Mammary epithelial cell (primary cell): ENCODE measurements at regions of chr17 and their contacts with region 1.

Region 1: DNA sequence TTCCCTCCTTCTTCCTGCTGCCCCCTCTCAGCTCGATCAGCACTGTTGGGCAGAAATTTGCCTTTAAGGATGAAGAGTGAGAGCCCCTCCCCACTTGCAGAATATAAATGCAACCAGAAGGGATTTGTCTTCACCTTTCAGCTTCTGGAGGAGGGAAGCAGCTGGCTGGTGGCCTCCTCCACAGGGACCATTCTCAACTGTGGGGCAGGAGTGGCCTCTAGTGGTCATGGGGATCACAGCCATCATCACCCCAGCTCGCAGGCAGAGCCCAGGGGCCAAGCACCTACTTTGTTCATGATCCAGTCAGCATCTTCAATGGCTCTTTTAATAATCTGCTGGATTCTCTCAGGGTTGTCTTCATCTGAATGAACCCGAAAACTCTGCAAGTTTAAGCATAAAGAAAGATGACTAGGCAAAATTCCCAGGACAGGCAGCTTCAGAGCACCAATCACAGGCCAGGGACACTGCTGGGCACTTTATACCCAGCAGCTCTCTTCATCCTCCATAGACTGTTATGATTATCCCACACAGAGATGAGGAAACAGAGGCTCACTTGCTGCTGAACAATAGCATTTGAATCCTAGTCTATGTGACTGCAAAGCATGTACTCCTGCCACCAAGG is 13.1 kb downstream of the LYRM9 start:
- DNase-seq: peak; percentile 48
- H3K4me3 ChIP-seq: no peak overlapping the region
- H3K27ac ChIP-seq: no peak overlapping the region
- H3K4me1 ChIP-seq: no peaks in the 10 kb centered on the region
- H3K27me3 ChIP-seq: no peaks in the 10 kb centered on the region
- CTCF ChIP-seq: peak; percentile 92 to 94

Region 2: GRCh38 chr17:27760069-27760885 is 119.8 kb before region 1 on chr17:
- CTCF ChIA-PET with region 1: interaction called, 8 read pairs
- dilution Hi-C with region 1: loop called (anchors 5 kb)
- in situ Hi-C with region 1: loop called (anchors 5 to 10 kb)
- intact Hi-C with region 1: loop called (anchors 1 kb)
- DNase-seq: peak; percentile 19
- H3K4me3 ChIP-seq: no peak overlapping the region
- H3K27ac ChIP-seq: no peak overlapping the region
- H3K4me1 ChIP-seq: no peaks in the 10 kb centered on the region
- H3K27me3 ChIP-seq: no peaks in the 10 kb centered on the region
- CTCF ChIP-seq: peak; percentile 60 to 84

Region 3: GRCh38 chr17:27768858-27769410 is 111.2 kb before region 1 on chr17:
- CTCF ChIA-PET with region 1: no interaction called
- dilution Hi-C with region 1: loop called (anchors 5 kb)
- in situ Hi-C with region 1: loop called (anchors 5 to 10 kb)
- intact Hi-C with region 1: no loop called
- DNase-seq: no peak
- H3K4me3 ChIP-seq: no peak overlapping the region
- H3K27ac ChIP-seq: no peak overlapping the region
- H3K4me1 ChIP-seq: no peaks in the 10 kb centered on the region
- H3K27me3 ChIP-seq: no peaks in the 10 kb centered on the region
- CTCF ChIP-seq: no peak

Region 4: GRCh38 chr17:27793168-27793905 is 86.8 kb before region 1 on chr17:
- CTCF ChIA-PET with region 1: interaction called, 11 read pairs
- dilution Hi-C with region 1: no loop called
- in situ Hi-C with region 1: no loop called
- intact Hi-C with region 1: no loop called
- DNase-seq: peak; percentile 8
- H3K4me3 ChIP-seq: no peak overlapping the region
- H3K27ac ChIP-seq: no peak overlapping the region
- H3K4me1 ChIP-seq: peaks cover 5% of the 10 kb centered on the region
- H3K27me3 ChIP-seq: peaks cover 4% of the 10 kb centered on the region
- CTCF ChIP-seq: no peak

Region 5: GRCh38 chr17:27800522-27800921 is 79.6 kb before region 1 on chr17 and contains the start of gene NOS2:
- CTCF ChIA-PET with region 1: interaction called, 42 read pairs
- dilution Hi-C with region 1: loop called (anchors 5 kb)
- in situ Hi-C with region 1: loop called (anchors 5 kb)
- intact Hi-C with region 1: loop called (anchors 1 kb)
- DNase-seq: no peak
- H3K4me3 ChIP-seq: no peak within 1 kb of the TSS
- H3K27ac ChIP-seq: no peak within 1 kb of the TSS
- H3K4me1 ChIP-seq: peaks cover under 1% of the 10 kb centered on the region
- H3K27me3 ChIP-seq: no peaks in the 10 kb centered on the region
- CTCF ChIP-seq: no peak
- total RNA-seq, gene NOS2: not detected

Region 6: GRCh38 chr17:27805520-27806146 is 74.5 kb before region 1 on chr17:
- CTCF ChIA-PET with region 1: interaction called, 42 read pairs
- dilution Hi-C with region 1: loop called (anchors 5 kb)
- in situ Hi-C with region 1: loop called (anchors 5 kb)
- intact Hi-C with region 1: loop called (anchors 1 kb)
- DNase-seq: peak; percentile 75
- H3K4me3 ChIP-seq: peak overlapping the region in 1 of 3 experiments; percentile 21
- H3K27ac ChIP-seq: no peak overlapping the region
- H3K4me1 ChIP-seq: peaks cover 5% of the 10 kb centered on the region
- H3K27me3 ChIP-seq: no peaks in the 10 kb centered on the region
- CTCF ChIP-seq: peak; percentile 80 to 91